Ovary (tissue), 10 donors: ENCODE measurements at regions of chr11 and their contacts with region 1.

Region 1: GRCh38 chr11:126149759-126150625 is 61.5 kb downstream of the RPUSD4 start:
- DNase-seq: peak in 2 of 5 donors; percentile 59 to 61
- H3K4me3 ChIP-seq: no peak overlapping the region
- H3K27ac ChIP-seq: no peak overlapping the region
- H3K4me1 ChIP-seq: peaks cover 6% of the 10 kb centered on the region
- H3K27me3 ChIP-seq: no peaks in the 10 kb centered on the region
- CTCF ChIP-seq: no peak
- EP300 ChIP-seq: no peak
- POLR2A ChIP-seq: no peak

Region 2: DNA sequence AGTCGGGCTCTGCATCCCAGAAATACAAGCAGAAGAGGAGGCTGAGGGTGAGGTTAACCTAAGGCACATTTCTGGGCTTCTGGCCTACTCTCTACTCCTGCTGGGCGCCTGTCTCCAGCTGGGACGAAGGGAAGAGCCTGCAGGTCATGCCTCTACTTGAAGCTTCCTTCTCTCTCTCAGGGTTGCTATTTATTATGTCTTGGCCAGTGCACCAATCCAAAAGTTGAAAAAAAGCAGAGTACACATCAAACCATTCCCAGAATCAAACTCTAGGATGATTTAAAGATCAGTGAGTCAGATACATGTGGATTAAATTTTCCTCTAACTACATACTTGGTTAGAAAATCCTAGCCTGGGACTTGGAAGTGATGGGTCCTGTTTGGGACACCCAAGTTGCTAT is 27.1 kb before region 1 on chr11:
- intact Hi-C with region 1: loop called in 1 of 4 experiments (anchors 2 kb)
- DNase-seq: peak in 1 of 5 donors; percentile 59
- H3K4me3 ChIP-seq: no peak overlapping the region
- H3K27ac ChIP-seq: peak overlapping the region in 1 of 2 donors; percentile 64
- H3K4me1 ChIP-seq: peaks cover 17% of the 10 kb centered on the region
- H3K27me3 ChIP-seq: no peaks in the 10 kb centered on the region
- CTCF ChIP-seq: no peak
- EP300 ChIP-seq: no peak
- POLR2A ChIP-seq: no peak